ENCODE measurements at regions of chr9 and their contacts with region 1.

Region 1: GRCh38 chr9:91422758-91423711 is 597 bp downstream of the NFIL3 start:
- DNase-seq: peak; percentile 44
- ATAC-seq: no peak
- H3K4me3 ChIP-seq: peak overlapping the region; percentile 87 to 98 (median 91)
- H3K27ac ChIP-seq: peak overlapping the region; percentile 83
- H3K4me1 ChIP-seq: peaks cover 41% of the 10 kb centered on the region
- H3K27me3 ChIP-seq: no peaks in the 10 kb centered on the region; a peak in 1 of 5 replicates
- CTCF ChIP-seq: no peak
- EP300 ChIP-seq: no peak
- POLR2A ChIP-seq: peak; percentile 8 to 44; a peak in 1 of 4 replicates
- RAD21 ChIP-seq: no peak

Region 2: DNA sequence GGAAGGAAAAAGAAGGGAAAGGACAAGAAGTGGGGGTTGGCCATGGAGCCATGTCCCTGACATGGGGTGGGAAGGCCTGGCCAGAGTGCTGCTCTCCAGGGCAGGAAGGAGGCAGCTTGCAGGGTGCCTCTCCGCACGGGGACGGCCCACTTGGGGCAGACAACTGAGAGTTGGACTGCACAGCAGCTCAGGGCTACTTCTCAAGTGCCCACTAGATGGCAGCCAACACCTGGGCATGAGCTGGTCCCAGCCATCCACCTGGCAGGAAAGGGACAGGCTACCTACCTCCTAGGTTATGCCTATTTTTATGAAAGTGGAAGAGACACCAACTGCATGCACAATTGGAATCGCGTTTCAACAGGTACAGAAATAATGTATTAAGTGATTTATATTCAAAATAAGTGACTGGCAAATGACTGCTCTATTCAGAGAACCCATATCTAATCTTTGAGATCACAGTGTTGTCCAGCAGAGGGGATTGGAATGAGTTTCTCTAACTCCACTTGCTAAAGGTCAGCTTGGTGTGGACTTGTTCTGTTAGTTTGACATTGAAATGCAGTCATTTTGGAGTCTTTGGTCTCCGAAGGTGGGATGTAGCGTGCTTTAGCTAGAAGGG is 508.1 kb before region 1 on chr9:
- CTCF ChIA-PET with region 1: interaction called, 9 read pairs
- POLR2A ChIA-PET with region 1: interaction called, 4 read pairs
- in situ Hi-C with region 1: no loop called
- intact Hi-C with region 1: loop called (anchors 1 kb)
- DNase-seq: peak; percentile 63
- ATAC-seq: peak; percentile 97
- H3K4me3 ChIP-seq: no peak overlapping the region
- H3K27ac ChIP-seq: no peak overlapping the region
- H3K4me1 ChIP-seq: no peaks in the 10 kb centered on the region
- H3K27me3 ChIP-seq: no peaks in the 10 kb centered on the region; a peak in 2 of 5 replicates
- CTCF ChIP-seq: peak; percentile 98
- EP300 ChIP-seq: no peak
- POLR2A ChIP-seq: no peak
- RAD21 ChIP-seq: peak; percentile 94

Region 3: DNA sequence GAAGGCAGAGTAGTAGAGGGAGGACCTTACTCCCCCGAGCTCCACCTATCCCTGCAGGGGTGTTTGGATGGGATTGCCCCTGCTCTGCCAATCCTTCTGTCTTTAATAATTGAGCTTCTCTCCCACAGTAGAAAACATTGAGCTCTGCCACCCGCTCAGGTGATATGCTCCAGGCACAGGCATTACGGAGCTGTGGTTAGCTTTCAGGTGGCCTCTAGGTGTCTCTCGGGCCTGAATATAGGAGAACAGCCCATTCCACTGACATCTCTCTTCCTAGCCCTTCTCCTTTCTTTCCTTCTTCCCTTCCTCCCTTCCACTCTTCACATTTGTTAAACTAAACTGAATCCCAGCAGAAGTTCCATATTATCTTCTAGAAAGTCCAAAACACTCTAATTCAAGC is 418.0 kb before region 1 on chr9:
- CTCF ChIA-PET with region 1: no interaction called
- POLR2A ChIA-PET with region 1: no interaction called
- in situ Hi-C with region 1: no loop called
- intact Hi-C with region 1: loop called (anchors 1 kb)
- DNase-seq: peak; percentile 7
- ATAC-seq: peak; percentile 92
- H3K4me3 ChIP-seq: no peak overlapping the region
- H3K27ac ChIP-seq: no peak overlapping the region
- H3K4me1 ChIP-seq: no peaks in the 10 kb centered on the region
- H3K27me3 ChIP-seq: no peaks in the 10 kb centered on the region
- CTCF ChIP-seq: peak; percentile 57
- EP300 ChIP-seq: no peak
- POLR2A ChIP-seq: no peak
- RAD21 ChIP-seq: no peak

Region 4: DNA sequence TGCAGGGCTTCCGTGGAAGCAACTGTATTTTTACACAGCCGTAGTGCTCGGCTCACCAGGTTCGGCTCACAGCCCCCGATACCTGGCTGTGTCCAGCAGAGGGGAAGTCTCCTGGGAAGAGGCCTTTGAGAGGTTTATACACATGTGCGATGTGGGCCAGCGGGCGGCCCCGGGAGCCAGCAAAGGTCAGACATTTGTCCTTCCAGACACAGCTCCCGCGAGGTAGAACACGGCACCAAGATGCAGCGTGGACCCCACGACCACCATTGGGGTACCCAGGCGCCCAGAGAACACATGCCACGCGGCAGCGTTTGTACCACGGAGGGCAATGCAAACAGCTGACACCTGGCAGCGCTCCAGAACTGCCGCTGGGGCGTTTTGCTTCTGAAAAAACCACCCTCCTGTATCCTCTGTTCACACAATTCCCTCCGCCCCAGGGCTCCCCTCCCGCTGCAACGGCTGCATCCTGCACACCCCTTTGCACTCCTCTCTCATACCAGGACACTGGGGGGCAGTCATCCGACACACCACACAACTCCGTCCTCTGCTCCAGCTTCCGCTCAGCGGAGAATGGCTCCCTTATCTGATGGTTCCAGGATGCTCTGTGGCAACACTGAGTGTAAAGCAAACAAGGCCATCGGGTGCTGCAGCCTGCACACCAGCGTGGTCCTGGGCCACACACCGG is 386.1 kb before region 1 on chr9:
- CTCF ChIA-PET with region 1: interaction called, 6 read pairs
- POLR2A ChIA-PET with region 1: interaction called, 33 read pairs
- in situ Hi-C with region 1: loop called (anchors 5 kb)
- intact Hi-C with region 1: loop called (anchors 1 kb)
- DNase-seq: peak; percentile 98
- ATAC-seq: peak; percentile 97
- H3K4me3 ChIP-seq: peak overlapping the region in 2 of 3 experiments; percentile 18 to 60; a peak in 3 of 6 replicates
- H3K27ac ChIP-seq: peak overlapping the region; percentile 94
- H3K4me1 ChIP-seq: peaks cover 62% of the 10 kb centered on the region
- H3K27me3 ChIP-seq: no peaks in the 10 kb centered on the region
- CTCF ChIP-seq: peak; percentile 99
- EP300 ChIP-seq: peak; percentile 86 to 91
- POLR2A ChIP-seq: peak in 1 of 2 experiments; percentile 83; a peak in 2 of 4 replicates
- RAD21 ChIP-seq: peak; percentile 97

Region 5: DNA sequence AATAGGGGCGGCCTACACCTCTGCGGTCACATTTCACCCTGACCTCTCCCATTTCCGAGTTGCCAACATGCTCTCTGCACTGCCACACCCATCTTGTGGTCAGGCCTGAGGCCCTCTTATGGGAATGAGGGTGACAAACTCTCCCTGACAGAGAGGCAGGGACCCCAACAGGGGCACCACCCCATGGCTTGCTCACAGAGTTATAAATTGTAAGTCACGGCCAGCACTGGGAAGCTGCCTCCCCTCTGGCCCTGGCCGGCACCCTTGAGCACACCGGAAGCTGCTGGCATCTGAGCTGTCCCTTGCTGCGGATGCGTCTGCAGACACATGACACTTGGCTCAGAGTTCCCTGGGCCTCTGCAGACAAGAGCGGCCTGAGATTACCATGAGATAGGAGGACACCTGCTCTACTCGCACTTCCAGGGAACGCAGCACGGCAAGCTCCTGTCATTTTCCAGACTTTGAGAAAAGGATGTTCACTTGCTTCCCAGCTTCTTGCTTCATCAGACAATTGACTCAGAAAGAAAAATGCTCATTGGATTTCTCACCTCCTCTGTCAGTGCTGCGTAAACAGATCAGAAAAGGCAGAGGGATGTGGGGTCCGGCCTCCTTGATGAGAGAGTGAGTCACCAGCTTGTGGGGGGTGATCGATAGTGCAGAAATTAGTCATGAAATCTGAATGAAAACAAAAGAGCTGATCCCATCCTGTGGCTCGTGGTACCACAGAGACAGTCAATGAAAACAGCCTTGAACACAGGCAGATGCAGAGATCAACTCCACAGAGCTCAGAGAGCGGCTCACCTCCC is 351.6 kb before region 1 on chr9:
- CTCF ChIA-PET with region 1: no interaction called
- POLR2A ChIA-PET with region 1: interaction called, 13 read pairs
- in situ Hi-C with region 1: no loop called
- intact Hi-C with region 1: no loop called
- DNase-seq: peak; percentile 76
- ATAC-seq: peak; percentile 88
- H3K4me3 ChIP-seq: peak overlapping the region; percentile 33 to 66 (median 50)
- H3K27ac ChIP-seq: peak overlapping the region; percentile 71
- H3K4me1 ChIP-seq: peaks cover 62% of the 10 kb centered on the region
- H3K27me3 ChIP-seq: no peaks in the 10 kb centered on the region
- CTCF ChIP-seq: no peak; the same call in 1 of the 2 replicates
- EP300 ChIP-seq: peak in 1 of 2 experiments; percentile 50; a peak in 2 of 4 replicates
- POLR2A ChIP-seq: peak; percentile 18 to 61; a peak in 3 of 4 replicates
- RAD21 ChIP-seq: no peak

Region 6: GRCh38 chr9:91207729-91208418 is 215.2 kb before region 1 on chr9:
- CTCF ChIA-PET with region 1: no interaction called
- POLR2A ChIA-PET with region 1: interaction called, 16 read pairs
- in situ Hi-C with region 1: no loop called
- intact Hi-C with region 1: no loop called
- DNase-seq: peak; percentile 88
- ATAC-seq: peak; percentile 83
- H3K4me3 ChIP-seq: peak overlapping the region in 2 of 3 experiments; percentile 20 to 41; a peak in 3 of 6 replicates
- H3K27ac ChIP-seq: peak overlapping the region; percentile 91
- H3K4me1 ChIP-seq: peaks cover 83% of the 10 kb centered on the region
- H3K27me3 ChIP-seq: no peaks in the 10 kb centered on the region
- CTCF ChIP-seq: no peak
- EP300 ChIP-seq: peak; percentile 34 to 83; a peak in 2 of 4 replicates
- POLR2A ChIP-seq: 0 out of 4 replicates have a peak, but pooled peaks of 1 of the 2 experiments have one; percentile 18
- RAD21 ChIP-seq: no peak

Region 7: GRCh38 chr9:91361291-91362050 is 61.6 kb before region 1 on chr9 and contains the start of gene AUH:
- CTCF ChIA-PET with region 1: interaction called, 3 read pairs
- POLR2A ChIA-PET with region 1: interaction called, 13 read pairs
- in situ Hi-C with region 1: loop called (anchors 5 kb)
- intact Hi-C with region 1: loop called (anchors 1 kb)
- DNase-seq: peak; percentile 60
- ATAC-seq: peak; percentile 92
- H3K4me3 ChIP-seq: peak within 1 kb of the TSS; percentile 95 to 99 (median 98)
- H3K27ac ChIP-seq: peak within 1 kb of the TSS; percentile 84
- H3K4me1 ChIP-seq: peaks cover 45% of the 10 kb centered on the region
- H3K27me3 ChIP-seq: no peaks in the 10 kb centered on the region; a peak in 1 of 5 replicates
- CTCF ChIP-seq: no peak
- EP300 ChIP-seq: no peak
- POLR2A ChIP-seq: peak; percentile 61 to 70
- RAD21 ChIP-seq: peak; percentile 46; the same call in 1 of the 2 replicates
- total RNA-seq, gene AUH: 31.9 and 35.7 TPM in 2 replicates

Region 8: GRCh38 chr9:91451519-91452270 is 28.7 kb after region 1 on chr9:
- CTCF ChIA-PET with region 1: no interaction called
- POLR2A ChIA-PET with region 1: no interaction called
- in situ Hi-C with region 1: no loop called
- intact Hi-C with region 1: no loop called
- DNase-seq: no peak
- ATAC-seq: no peak
- H3K4me3 ChIP-seq: no peak overlapping the region
- H3K27ac ChIP-seq: no peak overlapping the region
- H3K4me1 ChIP-seq: no peaks in the 10 kb centered on the region
- H3K27me3 ChIP-seq: no peaks in the 10 kb centered on the region
- CTCF ChIP-seq: no peak
- EP300 ChIP-seq: no peak
- POLR2A ChIP-seq: no peak
- RAD21 ChIP-seq: no peak

Region 9: GRCh38 chr9:91530829-91531228 is 107.8 kb after region 1 on chr9:
- CTCF ChIA-PET with region 1: no interaction called
- POLR2A ChIA-PET with region 1: no interaction called
- in situ Hi-C with region 1: no loop called
- intact Hi-C with region 1: no loop called
- DNase-seq: peak; percentile 45
- ATAC-seq: no peak
- H3K4me3 ChIP-seq: no peak overlapping the region
- H3K27ac ChIP-seq: no peak overlapping the region
- H3K4me1 ChIP-seq: peaks cover 12% of the 10 kb centered on the region
- H3K27me3 ChIP-seq: peaks cover 0 to 21% of the 10 kb centered on the region in 2 experiments; a peak in 2 of 5 replicates
- CTCF ChIP-seq: no peak
- EP300 ChIP-seq: peak in 1 of 2 experiments; percentile 33; a peak in 1 of 4 replicates
- POLR2A ChIP-seq: no peak
- RAD21 ChIP-seq: no peak

Measured in HepG2 (cell line).